ENCODE measurements at regions of chr3 and their contacts with region 1.

Region 1: GRCh38 chr3:50321336-50322114 is 1.0 kb downstream of the HYAL2 start:
- DNase-seq: peak; percentile 89
- H3K4me3 Mint-ChIP-seq: peak overlapping the region; percentile 80
- H3K27ac Mint-ChIP-seq: peak overlapping the region; percentile 98
- H3K4me1 Mint-ChIP-seq: peaks cover 17% of the 10 kb centered on the region
- H3K27me3 Mint-ChIP-seq: no peaks in the 10 kb centered on the region
- CTCF ChIP-seq: peak; percentile 38

Region 2: GRCh38 chr3:50278868-50279224 is 42.7 kb before region 1 on chr3 and contains the start of gene LSMEM2:
- CTCF ChIA-PET with region 1: interaction called, 10 read pairs
- POLR2A ChIA-PET with region 1: no interaction called
- intact Hi-C with region 1: loop called (anchors 1 kb)
- DNase-seq: no peak
- H3K4me3 Mint-ChIP-seq: no peak within 1 kb of the TSS
- H3K27ac Mint-ChIP-seq: no peak within 1 kb of the TSS
- H3K4me1 Mint-ChIP-seq: peaks cover 9% of the 10 kb centered on the region
- H3K27me3 Mint-ChIP-seq: no peaks in the 10 kb centered on the region
- CTCF ChIP-seq: no peak
- total RNA-seq, gene LSMEM2: 0.20 TPM in 1 of 2 replicates, not detected in the other

Region 3: GRCh38 chr3:50433954-50434353 is 112.4 kb after region 1 on chr3:
- CTCF ChIA-PET with region 1: no interaction called
- POLR2A ChIA-PET with region 1: no interaction called
- intact Hi-C with region 1: no loop called
- DNase-seq: no peak
- H3K4me3 Mint-ChIP-seq: no peak overlapping the region
- H3K27ac Mint-ChIP-seq: no peak overlapping the region
- H3K4me1 Mint-ChIP-seq: no peaks in the 10 kb centered on the region
- H3K27me3 Mint-ChIP-seq: peaks cover 14% of the 10 kb centered on the region
- CTCF ChIP-seq: no peak